ENCODE measurements at regions of chr9 and their contacts with region 1.

Region 1: DNA sequence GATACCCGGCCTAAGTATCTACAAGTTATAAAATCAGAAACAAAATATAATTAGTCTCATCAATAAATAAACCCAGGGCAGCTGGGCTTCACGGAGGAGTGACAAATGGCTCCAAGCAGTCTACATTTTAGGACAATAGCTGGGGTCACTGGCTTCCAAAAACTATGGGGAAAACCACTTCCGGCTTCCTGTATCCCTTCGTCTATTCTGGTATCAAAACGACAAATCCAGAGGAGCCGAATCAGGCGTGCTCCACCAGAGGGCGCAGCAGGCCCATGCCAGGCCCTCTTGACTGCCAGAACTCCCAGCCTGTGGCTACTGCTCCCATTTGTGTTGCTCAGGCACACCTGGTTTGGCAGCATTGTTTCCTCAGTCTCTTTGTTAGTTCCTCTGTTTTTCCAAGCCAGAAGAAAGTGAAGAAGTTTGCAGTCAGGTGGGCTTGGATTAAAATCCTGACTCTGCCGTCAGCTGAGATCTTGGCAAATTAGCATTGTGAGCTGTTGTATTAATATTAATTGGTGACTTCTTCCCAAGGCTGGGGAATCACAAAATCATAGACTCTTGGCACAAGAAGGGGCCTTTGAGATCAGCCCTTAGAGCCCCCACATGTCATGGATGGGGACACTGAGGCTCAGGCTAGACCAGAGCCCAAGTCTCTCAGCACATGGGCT is 11.6 kb upstream of the RAB14 start:
- DNase-seq: peak; percentile 78 to 94
- H3K4me3 ChIP-seq: no peak overlapping the region
- H3K27ac ChIP-seq: no peak overlapping the region
- H3K4me1 ChIP-seq: peaks cover 5% of the 10 kb centered on the region; the same call in 1 of the 2 replicates
- H3K27me3 ChIP-seq: no peaks in the 10 kb centered on the region
- CTCF ChIP-seq: peak; percentile 95

Region 2: DNA sequence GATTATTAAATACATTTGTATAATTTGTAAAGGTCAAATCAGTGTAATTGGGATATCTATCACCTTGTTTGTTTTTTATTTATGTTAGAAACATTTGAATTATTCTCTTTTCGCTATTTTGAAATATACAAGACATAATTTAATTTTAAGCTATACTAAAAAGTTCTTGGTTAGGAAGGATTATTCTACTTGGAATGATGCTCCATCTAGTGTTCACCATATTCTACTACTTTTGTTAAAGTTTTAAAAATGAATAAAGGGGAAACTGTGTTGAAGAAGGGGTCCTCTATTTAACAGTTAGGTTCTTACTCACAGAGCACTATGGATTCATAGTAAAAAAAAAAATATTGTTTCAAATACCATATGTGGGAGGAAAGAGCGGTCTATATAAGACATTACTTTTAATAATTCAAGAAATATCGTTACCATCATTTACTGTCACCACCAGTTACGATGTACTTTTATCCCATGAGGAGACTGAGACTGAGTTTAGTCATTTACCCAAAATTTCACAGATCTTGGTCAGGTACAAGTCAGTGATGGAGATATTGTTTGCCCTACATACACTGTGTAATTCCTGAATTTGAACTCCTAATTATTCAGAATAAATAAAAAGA is 163.1 kb after region 1 on chr9:
- CTCF ChIA-PET with region 1: interaction called, 6 read pairs
- POLR2A ChIA-PET with region 1: no interaction called
- intact Hi-C with region 1: loop called (anchors 1 kb)
- DNase-seq: no peak
- H3K4me3 ChIP-seq: no peak overlapping the region
- H3K27ac ChIP-seq: no peak overlapping the region
- H3K4me1 ChIP-seq: peaks cover 23% of the 10 kb centered on the region
- H3K27me3 ChIP-seq: no peaks in the 10 kb centered on the region
- CTCF ChIP-seq: peak; percentile 63

Region 3: DNA sequence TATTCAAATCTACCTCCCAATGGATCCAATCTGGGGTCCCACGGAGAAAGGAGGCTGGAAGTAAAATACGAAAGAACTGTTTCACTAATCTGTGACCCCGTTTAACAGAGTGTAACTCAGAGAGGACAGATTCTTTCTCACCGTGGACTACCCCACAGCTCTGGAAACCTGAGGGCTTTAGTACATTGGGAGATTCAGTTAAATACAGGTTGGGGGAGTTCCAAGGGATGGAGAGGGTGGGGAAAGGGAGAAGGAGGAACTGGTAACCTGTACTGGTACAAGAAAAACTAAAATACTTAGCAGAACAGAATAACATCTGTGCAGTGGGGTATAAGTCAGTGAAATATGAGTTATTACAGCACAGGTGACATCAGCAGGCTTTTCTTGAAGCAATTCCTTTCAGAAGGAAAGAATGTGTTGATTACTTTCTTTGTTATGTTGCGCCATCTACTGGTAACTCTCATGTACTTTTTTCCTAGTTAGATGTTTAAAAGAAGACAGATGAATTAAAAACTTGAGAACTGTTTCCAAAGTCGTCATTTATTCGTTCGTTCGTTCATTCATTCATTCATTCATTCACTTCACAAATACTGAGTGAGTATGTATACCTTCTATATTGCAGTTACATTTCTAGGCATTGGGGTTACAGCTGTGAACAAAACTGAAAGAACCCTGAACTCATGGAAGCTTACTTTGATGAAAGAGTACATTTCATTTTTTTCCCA is 186.8 kb after region 1 on chr9:
- CTCF ChIA-PET with region 1: no interaction called
- POLR2A ChIA-PET with region 1: no interaction called
- intact Hi-C with region 1: loop called (anchors 1 kb)
- DNase-seq: peak in 1 of 2 experiments; percentile 68
- H3K4me3 ChIP-seq: no peak overlapping the region
- H3K27ac ChIP-seq: no peak overlapping the region
- H3K4me1 ChIP-seq: no peaks in the 10 kb centered on the region
- H3K27me3 ChIP-seq: no peaks in the 10 kb centered on the region
- CTCF ChIP-seq: peak; percentile 80